CD8-positive, alpha-beta T cell (primary cell): ENCODE measurements at regions of chr7 and their contacts with region 1.

Region 1: DNA sequence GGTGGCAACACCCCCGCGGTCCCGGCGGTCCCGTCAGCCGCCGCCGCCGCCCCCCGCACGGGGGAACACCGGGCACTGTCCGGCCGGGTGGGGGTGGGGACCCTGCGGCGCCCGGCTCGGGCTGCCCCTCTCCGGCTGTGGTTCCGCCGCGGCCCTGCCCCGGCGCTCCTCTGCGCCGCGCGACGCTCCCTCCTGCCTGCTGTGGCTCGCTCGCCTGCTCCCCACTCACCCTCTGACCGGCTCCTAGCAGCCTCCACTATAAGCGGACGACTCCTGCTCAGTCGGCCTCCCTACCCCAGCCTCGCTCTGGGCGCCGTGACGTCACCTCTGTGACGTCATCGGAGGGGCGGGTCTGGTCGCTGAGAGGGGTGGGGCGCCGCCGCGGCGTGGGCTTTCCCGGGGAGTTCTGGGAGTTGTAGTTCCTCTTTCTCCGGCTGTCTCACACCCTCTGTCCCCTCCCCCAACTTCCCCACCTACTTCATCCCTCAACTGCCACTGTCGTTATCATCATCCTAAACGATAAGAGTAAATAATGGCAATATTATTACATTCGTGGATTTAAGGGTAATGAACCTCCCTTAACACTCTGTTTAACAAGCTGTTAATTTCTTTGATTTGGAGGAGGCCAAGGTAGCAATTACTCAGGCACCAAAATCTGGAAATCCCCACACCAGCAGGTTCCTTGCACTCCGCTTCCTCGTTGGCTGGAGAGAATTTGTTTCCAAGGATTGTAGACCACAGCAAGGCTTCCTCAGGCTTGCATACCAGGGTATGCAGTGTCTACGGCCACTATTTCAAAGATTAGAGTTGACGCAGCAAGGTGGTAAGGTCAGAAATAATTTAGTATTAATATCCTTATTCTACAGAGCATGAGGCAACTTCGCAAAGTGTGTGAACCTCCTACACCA is at the start of gene UBE2H:
- DNase-seq: peak; percentile 86 to 97 (median 93)
- ATAC-seq: peak; percentile 76
- H3K4me3 ChIP-seq: peak within 1 kb of the TSS; percentile 81 to 83
- H3K4me3 Mint-ChIP-seq: peak within 1 kb of the TSS; percentile 100
- H3K27ac ChIP-seq: peak within 1 kb of the TSS; percentile 89 to 91
- H3K27ac Mint-ChIP-seq: peak within 1 kb of the TSS; percentile 99
- H3K4me1 ChIP-seq: peaks cover 38% of the 10 kb centered on the region
- H3K4me1 Mint-ChIP-seq: peaks cover 9% of the 10 kb centered on the region
- H3K27me3 ChIP-seq: no peaks in the 10 kb centered on the region
- H3K27me3 Mint-ChIP-seq: no peaks in the 10 kb centered on the region
- CTCF ChIP-seq: no peak
- total RNA-seq, gene UBE2H: 53.7 to 63.6 TPM

Region 2: DNA sequence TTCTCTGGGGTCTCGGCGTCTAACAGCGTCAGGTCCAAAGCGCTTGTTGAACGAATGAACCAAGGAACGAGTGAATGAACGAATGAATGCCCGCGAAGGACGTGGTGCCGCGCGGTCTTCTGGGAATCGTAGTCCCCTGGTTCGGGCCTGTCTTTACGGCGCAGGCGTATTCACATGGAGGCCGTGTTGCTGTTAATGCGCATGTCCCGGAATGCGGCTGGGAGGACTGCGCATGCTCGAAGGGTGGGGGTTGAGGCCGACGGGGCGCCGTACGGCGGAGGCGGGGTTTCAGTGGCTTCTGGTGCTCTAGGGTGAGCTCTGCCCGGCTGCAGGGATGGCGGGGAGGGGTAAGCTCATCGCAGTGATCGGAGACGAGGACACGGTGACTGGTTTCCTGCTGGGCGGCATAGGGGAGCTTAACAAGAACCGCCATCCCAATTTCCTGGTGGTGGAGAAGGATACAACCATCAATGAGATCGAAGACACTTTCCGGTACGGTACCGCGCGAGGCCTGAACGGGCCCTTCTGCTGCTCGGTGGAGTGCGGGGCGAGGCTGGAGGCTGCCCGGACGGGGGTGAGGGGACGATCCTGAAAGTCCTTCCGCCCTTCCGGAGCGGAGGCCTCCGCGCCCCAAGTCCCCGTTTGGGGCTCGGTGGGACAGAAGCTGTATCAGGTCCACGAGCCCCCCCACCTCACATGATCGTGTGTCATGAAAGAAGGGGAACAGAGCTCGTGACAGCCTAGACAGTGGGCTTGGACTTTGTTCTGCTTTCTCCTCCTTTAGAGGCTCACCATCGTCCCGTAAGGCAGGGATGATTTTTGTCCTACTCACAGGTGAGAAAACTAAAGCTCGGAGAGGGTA is 1090.1 kb before region 1 on chr7 and contains the start of gene ATP6V1F:
- CTCF ChIA-PET with region 1: no interaction called
- POLR2A ChIA-PET with region 1: no interaction called
- intact Hi-C with region 1: loop called in 1 of 2 experiments (anchors 5 kb)
- DNase-seq: peak; percentile 97 to 100 (median 99)
- ATAC-seq: peak; percentile 87
- H3K4me3 ChIP-seq: peak within 1 kb of the TSS; percentile 80 to 92
- H3K4me3 Mint-ChIP-seq: peak within 1 kb of the TSS; percentile 96
- H3K27ac ChIP-seq: peak within 1 kb of the TSS; percentile 71 to 74
- H3K27ac Mint-ChIP-seq: peak within 1 kb of the TSS; percentile 94
- H3K4me1 ChIP-seq: peaks cover 17% of the 10 kb centered on the region
- H3K4me1 Mint-ChIP-seq: peaks cover 34% of the 10 kb centered on the region
- H3K27me3 ChIP-seq: no peaks in the 10 kb centered on the region
- H3K27me3 Mint-ChIP-seq: no peaks in the 10 kb centered on the region
- CTCF ChIP-seq: no peak
- total RNA-seq, gene ATP6V1F: 54.8 to 59.3 TPM

Region 3: GRCh38 chr7:129433847-129434674 is 518.8 kb before region 1 on chr7 and contains the start of gene STRIP2:
- CTCF ChIA-PET with region 1: no interaction called
- POLR2A ChIA-PET with region 1: no interaction called
- intact Hi-C with region 1: loop called in 1 of 2 experiments (anchors 5 kb)
- DNase-seq: peak; percentile 73 to 92 (median 90)
- ATAC-seq: peak; percentile 95
- H3K4me3 ChIP-seq: peak within 1 kb of the TSS; percentile 91 to 93
- H3K4me3 Mint-ChIP-seq: peak within 1 kb of the TSS; percentile 94
- H3K27ac ChIP-seq: no peak within 1 kb of the TSS
- H3K27ac Mint-ChIP-seq: peak within 1 kb of the TSS; percentile 46
- H3K4me1 ChIP-seq: peaks cover 12% of the 10 kb centered on the region
- H3K4me1 Mint-ChIP-seq: peaks cover 20% of the 10 kb centered on the region
- H3K27me3 ChIP-seq: peaks cover 0 to 8% of the 10 kb centered on the region in 2 experiments
- H3K27me3 Mint-ChIP-seq: peaks cover 29% of the 10 kb centered on the region
- CTCF ChIP-seq: no peak
- total RNA-seq, gene STRIP2: 0.19 TPM in 1 of 2 experiments, not detected in the other

Region 4: GRCh38 chr7:129670656-129671055 is 282.3 kb before region 1 on chr7:
- CTCF ChIA-PET with region 1: no interaction called
- POLR2A ChIA-PET with region 1: no interaction called
- intact Hi-C with region 1: no loop called
- DNase-seq: no peak
- ATAC-seq: no peak
- H3K4me3 ChIP-seq: no peak overlapping the region
- H3K4me3 Mint-ChIP-seq: no peak overlapping the region
- H3K27ac ChIP-seq: no peak overlapping the region
- H3K27ac Mint-ChIP-seq: no peak overlapping the region
- H3K4me1 ChIP-seq: no peaks in the 10 kb centered on the region
- H3K4me1 Mint-ChIP-seq: peaks cover 1% of the 10 kb centered on the region
- H3K27me3 ChIP-seq: no peaks in the 10 kb centered on the region
- H3K27me3 Mint-ChIP-seq: no peaks in the 10 kb centered on the region
- CTCF ChIP-seq: no peak

Region 5: DNA sequence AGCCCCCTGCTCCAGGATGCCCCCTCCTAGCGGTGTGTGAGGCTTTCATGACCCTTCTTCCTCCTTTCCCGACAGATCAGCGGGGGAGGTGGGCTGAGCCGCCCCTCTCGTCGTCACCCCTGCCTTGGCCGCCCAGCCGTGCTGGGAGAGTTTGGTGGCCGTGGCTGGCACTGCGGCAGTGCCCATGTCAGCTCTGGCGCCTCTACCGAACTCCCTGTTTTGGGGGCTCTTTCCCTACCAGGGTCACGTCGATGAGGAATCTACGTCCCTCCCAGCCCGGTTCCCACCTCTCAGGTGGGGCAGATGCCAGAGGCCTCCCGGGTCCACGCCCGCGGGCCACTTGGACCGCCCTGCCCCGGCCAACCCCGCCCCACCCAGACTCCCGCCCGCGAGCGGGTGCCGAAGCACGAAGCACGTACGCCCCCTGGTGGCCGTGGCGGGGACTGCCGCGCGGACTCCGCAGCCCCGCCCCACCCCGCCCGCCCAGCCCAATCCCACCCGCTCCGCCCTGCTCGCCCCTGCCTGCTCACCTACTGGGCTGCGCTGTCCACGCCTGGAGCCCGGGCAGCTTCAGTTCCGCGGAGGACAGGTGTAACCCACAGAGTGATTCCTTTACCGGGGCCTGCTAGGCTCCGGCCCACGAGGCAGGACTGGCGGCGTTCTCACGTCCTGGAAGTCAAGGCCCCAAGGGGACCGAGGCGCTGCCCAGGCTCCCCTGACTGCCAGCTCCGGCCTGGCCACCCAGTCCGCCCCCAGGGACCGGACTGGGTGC is 127.2 kb before region 1 on chr7:
- CTCF ChIA-PET with region 1: interaction called, 5 read pairs
- POLR2A ChIA-PET with region 1: no interaction called
- intact Hi-C with region 1: loop called (anchors 1 to 2 kb)
- DNase-seq: peak; percentile 80 to 95 (median 87)
- ATAC-seq: peak; percentile 84
- H3K4me3 ChIP-seq: peak overlapping the region; percentile 73 to 74
- H3K4me3 Mint-ChIP-seq: peak overlapping the region; percentile 89
- H3K27ac ChIP-seq: no peak overlapping the region
- H3K27ac Mint-ChIP-seq: no peak overlapping the region
- H3K4me1 ChIP-seq: no peaks in the 10 kb centered on the region
- H3K4me1 Mint-ChIP-seq: peaks cover 17% of the 10 kb centered on the region
- H3K27me3 ChIP-seq: no peaks in the 10 kb centered on the region
- H3K27me3 Mint-ChIP-seq: no peaks in the 10 kb centered on the region
- CTCF ChIP-seq: peak; percentile 90

Region 6: GRCh38 chr7:130010689-130011412 is 57.9 kb after region 1 on chr7:
- CTCF ChIA-PET with region 1: interaction called, 4 read pairs
- POLR2A ChIA-PET with region 1: no interaction called
- intact Hi-C with region 1: loop called in 1 of 2 experiments (anchors 5 kb)
- DNase-seq: peak; percentile 78 to 92 (median 87)
- ATAC-seq: peak; percentile 96
- H3K4me3 ChIP-seq: no peak overlapping the region
- H3K4me3 Mint-ChIP-seq: no peak overlapping the region
- H3K27ac ChIP-seq: no peak overlapping the region
- H3K27ac Mint-ChIP-seq: no peak overlapping the region
- H3K4me1 ChIP-seq: no peaks in the 10 kb centered on the region
- H3K4me1 Mint-ChIP-seq: peaks cover 2% of the 10 kb centered on the region
- H3K27me3 ChIP-seq: no peaks in the 10 kb centered on the region
- H3K27me3 Mint-ChIP-seq: no peaks in the 10 kb centered on the region
- CTCF ChIP-seq: peak; percentile 79

Region 7: GRCh38 chr7:130205084-130205947 is 252.4 kb after region 1 on chr7 and contains the start of gene TMEM209:
- CTCF ChIA-PET with region 1: no interaction called
- POLR2A ChIA-PET with region 1: no interaction called
- intact Hi-C with region 1: loop called (anchors 5 kb)
- DNase-seq: peak; percentile 85 to 97 (median 93)
- ATAC-seq: peak; percentile 96
- H3K4me3 ChIP-seq: peak within 1 kb of the TSS; percentile 95 to 99
- H3K4me3 Mint-ChIP-seq: peak within 1 kb of the TSS; percentile 100
- H3K27ac ChIP-seq: peak within 1 kb of the TSS; percentile 80 to 92
- H3K27ac Mint-ChIP-seq: peak within 1 kb of the TSS; percentile 100
- H3K4me1 ChIP-seq: peaks cover 5% of the 10 kb centered on the region
- H3K4me1 Mint-ChIP-seq: peaks cover 34% of the 10 kb centered on the region
- H3K27me3 ChIP-seq: no peaks in the 10 kb centered on the region
- H3K27me3 Mint-ChIP-seq: no peaks in the 10 kb centered on the region
- CTCF ChIP-seq: no peak
- total RNA-seq, gene TMEM209: 15.7 to 15.9 TPM

Region 8: DNA sequence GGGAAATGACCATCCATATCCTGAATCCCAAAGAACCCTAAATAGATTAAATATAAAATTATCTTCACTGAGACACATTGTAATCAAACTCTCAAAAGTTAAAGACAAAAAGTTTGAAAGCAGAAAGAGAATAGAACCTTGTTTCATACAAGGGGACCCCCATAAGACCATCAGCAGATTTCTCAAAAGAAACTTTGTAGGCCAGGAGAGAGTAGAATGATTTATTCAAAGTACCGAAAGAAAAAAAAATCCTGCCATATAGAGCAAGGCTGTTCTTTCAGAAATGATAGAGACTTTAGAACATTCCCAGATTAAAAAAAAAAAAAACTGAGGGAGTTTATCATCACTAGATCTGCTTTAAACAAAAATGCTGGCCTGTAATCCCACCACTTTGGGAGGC is 815.9 kb after region 1 on chr7:
- CTCF ChIA-PET with region 1: no interaction called
- POLR2A ChIA-PET with region 1: no interaction called
- intact Hi-C with region 1: no loop called
- DNase-seq: no peak
- ATAC-seq: no peak
- H3K4me3 ChIP-seq: no peak overlapping the region
- H3K4me3 Mint-ChIP-seq: no peak overlapping the region
- H3K27ac ChIP-seq: no peak overlapping the region
- H3K27ac Mint-ChIP-seq: no peak overlapping the region
- H3K4me1 ChIP-seq: no peaks in the 10 kb centered on the region
- H3K4me1 Mint-ChIP-seq: no peaks in the 10 kb centered on the region
- H3K27me3 ChIP-seq: peaks cover 0 to 2% of the 10 kb centered on the region in 2 experiments
- H3K27me3 Mint-ChIP-seq: peaks cover 23% of the 10 kb centered on the region
- CTCF ChIP-seq: no peak